Gastrocnemius medialis (tissue), 4 donors: ENCODE measurements at regions of chr17 and their contacts with region 1.

Region 1: GRCh38 chr17:60525685-60526514 is at the start of gene APPBP2:
- DNase-seq: peak; percentile 71 to 82
- ATAC-seq: peak; percentile 97
- H3K4me3 ChIP-seq: peak within 1 kb of the TSS; percentile 92 to 98 (median 94)
- H3K27ac ChIP-seq: peak within 1 kb of the TSS; percentile 97 to 100 (median 98)
- H3K4me1 ChIP-seq: peaks cover 38 to 43% of the 10 kb centered on the region in 2 donors
- H3K27me3 ChIP-seq: no peaks in the 10 kb centered on the region
- CTCF ChIP-seq: no peak
- POLR2A ChIP-seq: peak; percentile 85 to 88
- total RNA-seq, gene APPBP2: 14.2 to 21.8 (median 18.1) TPM

Region 2: GRCh38 chr17:60435244-60436167 is 90.4 kb before region 1 on chr17:
- in situ Hi-C with region 1: no loop called
- intact Hi-C with region 1: no loop called
- DNase-seq: peak; percentile 60 to 63
- ATAC-seq: peak; percentile 84 to 91
- H3K4me3 ChIP-seq: peak overlapping the region in 2 of 4 donors; percentile 14 to 46
- H3K27ac ChIP-seq: peak overlapping the region in 1 of 4 donors; percentile 53
- H3K4me1 ChIP-seq: peaks cover 4 to 5% of the 10 kb centered on the region in 2 donors
- H3K27me3 ChIP-seq: no peaks in the 10 kb centered on the region
- CTCF ChIP-seq: peak; percentile 89 to 94 (median 92)
- POLR2A ChIP-seq: no peak

Region 3: DNA sequence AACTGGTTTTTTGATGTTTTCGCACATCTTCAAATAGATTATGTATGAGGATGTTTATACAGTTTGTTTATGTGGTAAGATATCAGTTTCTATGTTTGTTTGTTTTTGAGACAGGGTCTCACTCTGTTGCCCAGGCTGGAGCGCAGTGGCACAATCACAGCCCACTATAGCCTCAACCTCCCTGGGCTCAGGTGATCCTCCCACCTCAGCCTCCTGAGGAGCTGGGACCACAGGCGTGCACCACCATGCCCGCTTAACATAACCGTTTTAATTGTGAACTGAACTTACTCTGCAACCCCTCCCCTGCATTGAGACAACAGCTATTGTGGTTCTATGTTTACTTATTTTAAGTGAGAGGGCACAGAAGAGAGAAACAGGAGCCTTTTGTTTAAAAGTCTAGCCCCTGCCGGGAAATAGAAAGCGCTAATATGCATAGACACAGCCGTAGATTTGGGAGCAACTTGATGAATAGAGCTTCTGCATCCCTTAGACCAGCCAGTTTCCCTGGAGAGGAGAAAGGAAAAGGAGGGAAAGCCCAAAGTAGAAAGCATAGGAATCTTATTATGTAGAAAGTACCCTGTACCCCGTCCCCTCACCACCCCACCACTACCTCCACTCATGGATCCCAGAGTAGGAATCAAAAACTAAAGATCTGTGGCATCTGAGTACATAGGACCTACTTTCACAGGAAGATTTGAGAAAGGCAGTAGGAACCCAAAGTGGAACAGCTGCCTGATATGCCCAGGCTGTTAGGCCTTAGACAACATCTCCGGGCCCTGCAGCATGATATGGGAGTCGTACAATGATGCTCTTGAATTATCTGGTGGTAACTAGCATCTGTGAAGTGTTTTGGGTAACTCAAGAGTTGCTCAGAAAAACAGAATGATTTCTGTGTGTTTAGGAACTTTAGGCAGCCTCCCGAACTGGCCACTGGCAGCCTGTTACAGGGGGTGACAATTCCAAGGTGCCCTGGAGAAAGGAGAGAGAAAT is 19.9 kb after region 1 on chr17:
- in situ Hi-C with region 1: no loop called
- intact Hi-C with region 1: no loop called
- DNase-seq: no peak
- ATAC-seq: no peak
- H3K4me3 ChIP-seq: no peak overlapping the region
- H3K27ac ChIP-seq: no peak overlapping the region
- H3K4me1 ChIP-seq: no peaks in the 10 kb centered on the region
- H3K27me3 ChIP-seq: no peaks in the 10 kb centered on the region
- CTCF ChIP-seq: no peak
- POLR2A ChIP-seq: no peak

Region 4: GRCh38 chr17:60568561-60568960 is 42.7 kb after region 1 on chr17:
- in situ Hi-C with region 1: loop called in 1 of 4 experiments (anchors 10 kb)
- intact Hi-C with region 1: loop called (anchors 2 kb)
- DNase-seq: no peak
- ATAC-seq: no peak
- H3K4me3 ChIP-seq: no peak overlapping the region
- H3K27ac ChIP-seq: no peak overlapping the region
- H3K4me1 ChIP-seq: peaks cover 2 to 8% of the 10 kb centered on the region in 2 donors
- H3K27me3 ChIP-seq: no peaks in the 10 kb centered on the region
- CTCF ChIP-seq: no peak
- POLR2A ChIP-seq: no peak

Region 5: DNA sequence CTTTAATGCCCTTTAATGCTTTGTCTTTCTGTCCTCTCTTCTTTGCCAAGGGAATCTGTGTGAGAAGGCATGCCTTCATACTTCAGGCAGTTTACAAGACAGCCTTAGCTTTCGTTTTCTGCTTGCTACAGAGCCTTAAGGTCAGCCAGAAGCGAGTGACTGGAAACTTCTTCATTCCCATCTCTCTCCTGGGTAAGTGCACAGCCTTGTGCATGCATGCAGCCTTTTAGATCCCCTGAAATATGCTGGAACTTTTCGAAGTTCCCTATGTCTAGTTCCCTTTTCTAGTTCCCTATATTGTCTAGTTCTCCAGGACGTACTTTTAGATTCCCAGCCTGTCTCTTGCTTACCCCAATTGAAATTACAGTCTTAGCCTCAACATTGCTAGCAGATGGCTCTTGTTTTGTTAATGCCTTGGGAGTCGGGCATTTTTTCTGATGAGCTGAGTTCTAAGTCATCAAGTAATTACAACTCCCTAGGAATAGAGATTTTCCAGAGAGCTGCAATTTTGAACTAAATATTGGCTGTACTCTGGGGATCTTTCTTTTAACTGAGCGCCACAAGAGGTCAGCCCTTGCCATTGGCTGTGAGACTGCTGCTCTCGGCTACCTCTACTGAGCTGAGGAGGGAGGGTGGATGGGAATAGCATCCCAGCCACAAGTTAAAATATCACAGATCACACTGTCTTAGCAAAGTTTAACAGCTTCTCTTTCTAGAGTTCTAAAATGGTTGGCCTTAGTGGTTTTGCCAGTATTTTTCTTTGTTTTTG is 51.4 kb after region 1 on chr17:
- in situ Hi-C with region 1: loop called in 1 of 4 experiments (anchors 10 kb)
- intact Hi-C with region 1: no loop called
- DNase-seq: peak in 1 of 2 donors; percentile 28
- ATAC-seq: peak; percentile 78 to 91
- H3K4me3 ChIP-seq: peak overlapping the region; percentile 25 to 43 (median 41)
- H3K27ac ChIP-seq: peak overlapping the region; percentile 56 to 72 (median 66)
- H3K4me1 ChIP-seq: peaks cover 4 to 6% of the 10 kb centered on the region in 2 donors
- H3K27me3 ChIP-seq: no peaks in the 10 kb centered on the region
- CTCF ChIP-seq: peak; percentile 19 to 58 (median 32)
- POLR2A ChIP-seq: no peak

Region 6: GRCh38 chr17:60599620-60600489 is 74.0 kb after region 1 on chr17 and contains the start of gene PPM1D:
- in situ Hi-C with region 1: no loop called
- intact Hi-C with region 1: loop called (anchors 1 kb)
- DNase-seq: peak; percentile 98 to 99
- ATAC-seq: peak; percentile 89 to 92
- H3K4me3 ChIP-seq: peak within 1 kb of the TSS; percentile 87 to 96 (median 91)
- H3K27ac ChIP-seq: peak within 1 kb of the TSS; percentile 95 to 98 (median 98)
- H3K4me1 ChIP-seq: peaks cover 30% of the 10 kb centered on the region in 2 donors
- H3K27me3 ChIP-seq: no peaks in the 10 kb centered on the region
- CTCF ChIP-seq: peak in 2 of 5 experiments; percentile 13 to 20
- POLR2A ChIP-seq: peak; percentile 98 to 99
- total RNA-seq, gene PPM1D: 4.6 to 11.4 (median 9.2) TPM

Region 7: GRCh38 chr17:60641810-60642220 is 115.9 kb after region 1 on chr17:
- in situ Hi-C with region 1: no loop called
- intact Hi-C with region 1: loop called (anchors 5 kb)
- DNase-seq: peak; percentile 31
- ATAC-seq: peak; percentile 43 to 62
- H3K4me3 ChIP-seq: no peak overlapping the region
- H3K27ac ChIP-seq: peak overlapping the region in 2 of 4 donors; percentile 1 to 36
- H3K4me1 ChIP-seq: peaks cover 7 to 22% of the 10 kb centered on the region in 2 donors
- H3K27me3 ChIP-seq: no peaks in the 10 kb centered on the region
- CTCF ChIP-seq: peak in 3 of 5 experiments; percentile 23 to 48 (median 27)
- POLR2A ChIP-seq: no peak